CD4-positive, alpha-beta memory T cell (primary cell): ENCODE measurements at regions of chr10 and their contacts with region 1.

Region 1: DNA sequence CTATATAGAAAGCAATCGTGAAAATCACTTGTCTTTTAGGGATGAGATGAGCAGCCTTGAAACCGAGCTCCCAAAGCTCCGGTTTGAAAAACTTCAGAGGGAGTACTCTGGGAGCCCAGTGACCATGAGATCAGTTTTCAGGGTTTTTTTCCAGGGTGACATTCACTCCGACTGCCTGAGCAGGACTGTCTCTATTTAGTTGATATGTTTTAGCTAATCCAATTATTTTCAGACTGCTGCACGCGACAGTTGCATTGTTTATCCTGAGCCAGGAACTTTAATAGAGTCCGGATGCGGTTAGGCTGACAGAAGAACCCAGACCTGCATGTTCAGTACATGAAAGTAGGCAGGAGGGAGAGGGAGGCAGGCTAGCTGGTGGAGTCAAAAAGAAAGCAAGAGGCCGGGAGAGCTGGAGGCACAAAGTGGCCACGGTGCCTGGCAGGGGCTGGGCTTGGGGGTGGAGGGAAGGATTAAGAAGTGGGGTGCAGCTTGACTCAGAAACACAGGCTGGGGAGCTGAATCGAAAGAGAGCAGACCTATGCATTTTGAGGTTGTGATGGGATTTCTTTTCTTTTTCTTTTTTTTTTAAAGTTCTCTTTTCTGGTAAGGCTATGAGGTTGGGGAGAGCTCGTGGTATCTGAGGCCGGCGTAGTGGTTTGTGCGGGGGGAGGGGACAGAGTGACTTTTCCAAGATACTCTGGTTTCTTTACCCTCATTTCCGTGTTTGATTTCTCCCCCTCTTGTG is 5.6 kb downstream of the GATA3 start:
- DNase-seq: peak; percentile 73 to 84 (median 76)
- H3K4me3 ChIP-seq: peak overlapping the region; percentile 57 to 58
- H3K4me3 Mint-ChIP-seq: peak overlapping the region; percentile 94 to 100 (median 98)
- H3K27ac ChIP-seq: peak overlapping the region; percentile 83
- H3K27ac Mint-ChIP-seq: peak overlapping the region; percentile 93 to 99 (median 97)
- H3K4me1 ChIP-seq: peaks cover 77% of the 10 kb centered on the region
- H3K4me1 Mint-ChIP-seq: peaks cover 46 to 86% (median 70%) of the 10 kb centered on the region in 4 donors
- H3K27me3 ChIP-seq: no peaks in the 10 kb centered on the region
- H3K27me3 Mint-ChIP-seq: no peaks in the 10 kb centered on the region

Region 2: DNA sequence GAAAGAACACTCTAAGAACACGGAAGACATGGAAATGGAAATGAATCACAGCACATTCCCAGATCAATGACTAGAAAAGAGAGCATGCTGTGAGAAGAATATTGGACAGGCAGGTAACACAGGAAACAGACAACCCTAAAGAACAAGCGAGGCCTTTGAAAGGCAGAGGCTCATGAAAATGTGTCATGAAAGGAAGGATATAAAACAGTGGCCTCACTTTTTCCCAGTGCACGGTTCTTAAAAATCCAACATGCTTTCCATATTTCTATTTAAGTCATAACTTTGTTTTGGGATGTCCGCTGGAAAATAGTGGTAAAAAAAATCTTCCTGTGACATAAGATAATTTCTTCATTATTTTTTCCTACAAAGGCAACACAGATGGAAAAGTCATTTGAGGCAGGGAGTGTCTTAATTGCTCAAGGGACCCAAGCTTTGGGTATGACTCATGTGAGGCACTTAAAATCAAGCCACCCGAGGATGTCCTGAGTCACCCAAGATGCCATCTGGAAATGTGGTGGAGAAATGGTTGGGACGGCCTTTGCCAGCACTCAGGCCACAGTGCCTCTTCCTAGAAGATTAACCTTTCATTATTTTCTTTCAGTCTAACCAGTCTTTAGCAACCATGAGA is 410.3 kb before region 1 on chr10:
- CTCF ChIA-PET with region 1: no interaction called
- POLR2A ChIA-PET with region 1: no interaction called
- intact Hi-C with region 1: no loop called
- DNase-seq: no peak
- H3K4me3 ChIP-seq: no peak overlapping the region
- H3K4me3 Mint-ChIP-seq: no peak overlapping the region
- H3K27ac ChIP-seq: no peak overlapping the region
- H3K27ac Mint-ChIP-seq: no peak overlapping the region
- H3K4me1 ChIP-seq: no peaks in the 10 kb centered on the region
- H3K4me1 Mint-ChIP-seq: peaks cover 0 to 2% (median 0%) of the 10 kb centered on the region in 4 donors
- H3K27me3 ChIP-seq: no peaks in the 10 kb centered on the region
- H3K27me3 Mint-ChIP-seq: peaks cover 10 to 16% of the 10 kb centered on the region in 2 donors

Region 3: DNA sequence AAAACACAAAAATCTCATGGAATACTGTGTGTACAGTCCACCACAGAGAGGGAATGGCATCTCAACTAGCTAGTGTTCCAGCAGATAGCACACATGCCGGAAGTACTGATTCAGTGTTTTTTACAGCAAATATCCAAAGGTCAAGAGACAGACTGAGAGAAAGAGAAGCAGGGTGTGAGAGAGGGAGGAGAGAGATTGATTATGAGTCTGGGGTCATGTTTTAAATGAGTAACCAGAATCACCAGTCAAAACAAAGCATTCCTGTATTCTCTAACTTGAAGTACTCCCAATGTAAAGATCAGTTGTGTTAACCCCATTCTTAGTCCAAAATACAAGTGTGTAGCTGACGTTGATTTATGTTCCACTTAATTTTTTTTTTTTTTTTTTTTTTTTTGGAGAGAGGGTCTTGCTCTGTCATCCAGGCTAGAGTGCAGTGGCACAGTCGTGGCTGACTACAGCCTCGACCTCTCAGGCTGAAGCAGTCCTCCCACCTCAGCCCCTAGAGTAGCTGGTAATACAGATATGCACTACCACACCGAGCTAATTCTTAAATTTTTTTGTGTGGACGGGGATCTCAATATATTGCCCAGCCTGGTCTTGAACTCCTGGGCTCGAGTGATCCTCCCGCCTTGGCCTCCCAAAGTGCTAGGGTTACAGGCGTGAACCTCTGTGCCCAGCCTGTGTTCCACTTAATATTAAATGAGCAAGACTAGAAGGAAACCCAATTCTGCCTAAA is 127.7 kb before region 1 on chr10:
- CTCF ChIA-PET with region 1: no interaction called
- POLR2A ChIA-PET with region 1: no interaction called
- intact Hi-C with region 1: no loop called
- DNase-seq: no peak
- H3K4me3 ChIP-seq: no peak overlapping the region
- H3K4me3 Mint-ChIP-seq: peak overlapping the region in 1 of 8 donors; percentile 45
- H3K27ac ChIP-seq: no peak overlapping the region
- H3K27ac Mint-ChIP-seq: no peak overlapping the region
- H3K4me1 ChIP-seq: no peaks in the 10 kb centered on the region
- H3K4me1 Mint-ChIP-seq: peaks cover 10 to 21% (median 11%) of the 10 kb centered on the region in 4 donors
- H3K27me3 ChIP-seq: no peaks in the 10 kb centered on the region
- H3K27me3 Mint-ChIP-seq: no peaks in the 10 kb centered on the region

Region 4: GRCh38 chr10:8138471-8138870 is 78.3 kb after region 1 on chr10:
- CTCF ChIA-PET with region 1: interaction called, 3 read pairs
- POLR2A ChIA-PET with region 1: interaction called, 45 read pairs
- intact Hi-C with region 1: loop called (anchors 2 kb)
- DNase-seq: no peak
- H3K4me3 ChIP-seq: no peak overlapping the region
- H3K4me3 Mint-ChIP-seq: peak overlapping the region in 7 of 8 donors; percentile 21 to 82 (median 64)
- H3K27ac ChIP-seq: no peak overlapping the region
- H3K27ac Mint-ChIP-seq: peak overlapping the region in 6 of 7 donors; percentile 65 to 98 (median 87)
- H3K4me1 ChIP-seq: peaks cover 28% of the 10 kb centered on the region
- H3K4me1 Mint-ChIP-seq: peaks cover 24 to 43% (median 33%) of the 10 kb centered on the region in 4 donors
- H3K27me3 ChIP-seq: no peaks in the 10 kb centered on the region
- H3K27me3 Mint-ChIP-seq: no peaks in the 10 kb centered on the region

Region 5: GRCh38 chr10:8238986-8239385 is 178.9 kb after region 1 on chr10:
- CTCF ChIA-PET with region 1: no interaction called
- POLR2A ChIA-PET with region 1: interaction called, 13 read pairs
- intact Hi-C with region 1: loop called (anchors 2 kb)
- DNase-seq: peak in 4 of 5 donors; percentile 13 to 33 (median 22)
- H3K4me3 ChIP-seq: peak overlapping the region in 1 of 2 donors; percentile 17
- H3K4me3 Mint-ChIP-seq: peak overlapping the region; percentile 39 to 79 (median 64)
- H3K27ac ChIP-seq: peak overlapping the region; percentile 13
- H3K27ac Mint-ChIP-seq: peak overlapping the region; percentile 44 to 89 (median 72)
- H3K4me1 ChIP-seq: peaks cover 48% of the 10 kb centered on the region
- H3K4me1 Mint-ChIP-seq: peaks cover 35 to 77% (median 56%) of the 10 kb centered on the region in 4 donors
- H3K27me3 ChIP-seq: no peaks in the 10 kb centered on the region
- H3K27me3 Mint-ChIP-seq: no peaks in the 10 kb centered on the region

Region 6: DNA sequence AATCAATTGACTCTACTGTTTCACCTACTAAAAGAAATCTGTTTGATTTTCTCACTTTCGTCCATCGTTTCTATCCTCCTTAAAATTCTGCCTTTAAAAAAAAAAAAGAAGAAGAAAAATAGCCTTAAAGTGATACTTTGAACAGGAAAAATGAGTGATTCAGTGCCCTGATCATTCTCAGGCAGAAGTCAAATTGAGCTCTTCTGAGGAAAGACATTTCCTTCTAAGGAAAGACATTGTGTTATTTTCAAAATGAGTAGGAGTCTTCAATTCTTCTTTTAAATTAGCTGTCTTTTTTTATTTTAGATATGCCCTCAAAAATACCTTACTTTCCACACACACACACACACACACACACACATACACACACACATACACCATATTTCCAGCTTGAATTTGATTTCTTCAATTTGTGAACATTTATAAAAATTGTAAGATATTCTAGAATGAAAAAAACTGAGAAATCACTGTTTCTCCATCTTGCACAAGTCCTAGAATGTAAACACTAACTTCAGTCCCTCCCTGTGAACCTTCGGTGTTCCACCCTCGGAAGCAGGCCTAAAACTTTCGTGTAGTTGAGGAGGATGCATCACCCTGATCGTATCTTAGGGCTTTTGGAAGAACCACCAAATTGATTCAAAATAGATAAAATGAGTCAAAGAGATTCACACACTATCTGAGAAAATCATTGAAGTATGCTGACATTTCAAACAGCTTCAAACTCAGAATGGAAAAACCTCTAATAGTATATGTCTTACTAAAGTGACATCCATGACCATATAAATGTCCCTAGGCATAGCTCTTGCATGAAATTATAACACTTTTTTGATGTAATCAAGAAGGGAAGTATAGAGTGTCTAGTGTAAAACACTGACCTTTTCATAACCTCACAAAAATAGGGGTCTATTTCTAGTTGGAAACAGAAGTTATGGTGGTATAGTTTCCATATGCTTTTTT is 265.2 kb after region 1 on chr10:
- CTCF ChIA-PET with region 1: no interaction called
- POLR2A ChIA-PET with region 1: interaction called, 145 read pairs
- intact Hi-C with region 1: no loop called
- DNase-seq: peak in 1 of 5 donors; percentile 5
- H3K4me3 ChIP-seq: no peak overlapping the region
- H3K4me3 Mint-ChIP-seq: peak overlapping the region in 7 of 8 donors; percentile 7 to 64 (median 40)
- H3K27ac ChIP-seq: no peak overlapping the region
- H3K27ac Mint-ChIP-seq: peak overlapping the region; percentile 74 to 89 (median 78)
- H3K4me1 ChIP-seq: peaks cover 18% of the 10 kb centered on the region
- H3K4me1 Mint-ChIP-seq: peaks cover 16 to 52% (median 25%) of the 10 kb centered on the region in 4 donors
- H3K27me3 ChIP-seq: no peaks in the 10 kb centered on the region
- H3K27me3 Mint-ChIP-seq: no peaks in the 10 kb centered on the region

Region 7: DNA sequence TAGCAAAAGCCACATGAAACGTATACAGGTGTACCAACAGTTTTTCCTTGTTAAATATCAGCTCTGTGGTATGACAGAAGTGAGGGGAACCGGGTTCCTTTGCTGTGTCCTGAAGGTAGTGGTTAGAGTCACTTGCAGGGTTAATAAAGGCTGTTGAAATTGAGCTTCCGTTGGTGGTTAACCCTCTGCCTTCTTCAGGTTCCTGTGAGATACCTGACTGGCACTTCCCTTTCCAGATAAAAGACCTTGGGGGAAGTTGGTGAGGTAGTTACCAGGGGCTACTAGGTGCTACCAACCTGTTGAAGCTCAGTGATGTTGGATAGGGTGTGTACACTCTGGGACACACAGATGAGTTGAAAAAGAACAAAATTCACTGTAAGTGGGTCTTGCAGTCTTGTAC is 378.5 kb after region 1 on chr10:
- CTCF ChIA-PET with region 1: interaction called, 13 read pairs
- POLR2A ChIA-PET with region 1: interaction called, 17 read pairs
- intact Hi-C with region 1: no loop called
- DNase-seq: peak; percentile 60 to 73 (median 67)
- H3K4me3 ChIP-seq: no peak overlapping the region
- H3K4me3 Mint-ChIP-seq: peak overlapping the region in 6 of 8 donors; percentile 31 to 79 (median 51)
- H3K27ac ChIP-seq: no peak overlapping the region
- H3K27ac Mint-ChIP-seq: peak overlapping the region; percentile 48 to 90 (median 77)
- H3K4me1 ChIP-seq: peaks cover 28% of the 10 kb centered on the region
- H3K4me1 Mint-ChIP-seq: peaks cover 31 to 46% (median 39%) of the 10 kb centered on the region in 4 donors
- H3K27me3 ChIP-seq: no peaks in the 10 kb centered on the region
- H3K27me3 Mint-ChIP-seq: no peaks in the 10 kb centered on the region

Region 8: DNA sequence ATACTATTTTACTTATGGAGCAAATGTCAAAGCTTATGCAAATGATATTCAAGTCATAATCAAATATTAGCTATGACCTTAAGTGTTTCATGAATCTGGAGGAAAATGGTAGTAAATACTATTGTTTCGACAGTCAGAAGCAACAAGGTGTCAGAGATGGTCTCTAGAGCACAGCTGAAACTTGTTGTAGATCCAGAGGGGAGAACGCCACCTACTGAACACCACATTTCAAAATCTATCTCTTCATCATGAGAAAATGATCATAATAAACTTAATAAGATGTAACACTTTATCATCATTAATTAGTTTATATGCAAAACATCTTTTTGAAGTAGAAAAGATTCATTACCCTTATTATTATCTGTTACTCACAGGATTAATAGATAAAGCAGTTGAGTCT is 413.1 kb after region 1 on chr10:
- CTCF ChIA-PET with region 1: interaction called, 12 read pairs
- POLR2A ChIA-PET with region 1: interaction called, 45 read pairs
- intact Hi-C with region 1: loop called (anchors 1 kb)
- DNase-seq: peak in 4 of 5 donors; percentile 46 to 69 (median 64)
- H3K4me3 ChIP-seq: no peak overlapping the region
- H3K4me3 Mint-ChIP-seq: no peak overlapping the region
- H3K27ac ChIP-seq: no peak overlapping the region
- H3K27ac Mint-ChIP-seq: peak overlapping the region in 3 of 7 donors; percentile 35 to 48 (median 36)
- H3K4me1 ChIP-seq: no peaks in the 10 kb centered on the region
- H3K4me1 Mint-ChIP-seq: peaks cover 0 to 5% (median 3%) of the 10 kb centered on the region in 4 donors
- H3K27me3 ChIP-seq: no peaks in the 10 kb centered on the region
- H3K27me3 Mint-ChIP-seq: peaks cover 2 to 6% of the 10 kb centered on the region in 2 donors

Region 9: DNA sequence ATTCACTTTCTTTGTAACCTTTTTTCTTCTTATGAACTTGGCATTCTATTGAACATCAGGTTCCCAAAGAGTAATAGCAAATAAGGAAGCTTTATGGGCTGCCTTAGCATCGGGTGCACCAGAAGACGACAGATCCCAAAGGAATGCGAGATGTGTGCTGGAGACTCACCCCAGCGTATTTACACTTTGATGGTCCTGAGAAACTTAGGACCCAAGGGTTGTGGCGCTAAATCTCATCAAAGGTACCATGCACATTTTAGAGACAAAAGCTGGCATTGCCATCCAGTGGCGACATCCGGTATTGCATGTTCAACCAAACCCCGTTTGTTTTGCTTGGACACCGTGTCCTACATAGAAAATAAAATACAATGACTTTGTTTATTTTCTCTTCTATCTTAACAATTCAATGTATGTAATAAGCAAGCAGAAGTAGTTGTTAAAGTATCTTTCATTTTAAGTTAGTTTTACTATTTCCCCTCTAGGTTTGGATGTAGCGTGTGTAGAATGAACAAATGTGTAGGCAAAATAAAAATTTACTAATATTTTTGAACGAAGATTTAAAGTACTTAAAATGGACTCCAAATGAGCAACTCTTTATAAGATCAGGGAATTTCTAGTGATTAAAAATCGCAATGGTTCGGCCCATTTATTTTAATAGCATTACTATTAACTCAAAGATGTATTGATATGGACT is 1149.1 kb after region 1 on chr10:
- CTCF ChIA-PET with region 1: no interaction called
- POLR2A ChIA-PET with region 1: no interaction called
- intact Hi-C with region 1: loop called (anchors 2 kb)
- DNase-seq: peak; percentile 50 to 66 (median 60)
- H3K4me3 ChIP-seq: no peak overlapping the region
- H3K4me3 Mint-ChIP-seq: peak overlapping the region in 2 of 8 donors; percentile 25 to 58
- H3K27ac ChIP-seq: no peak overlapping the region
- H3K27ac Mint-ChIP-seq: no peak overlapping the region
- H3K4me1 ChIP-seq: peaks cover 3% of the 10 kb centered on the region
- H3K4me1 Mint-ChIP-seq: no peaks in the 10 kb centered on the region
- H3K27me3 ChIP-seq: no peaks in the 10 kb centered on the region
- H3K27me3 Mint-ChIP-seq: peaks cover 3 to 6% of the 10 kb centered on the region in 2 donors